Gastrocnemius medialis (tissue), 4 donors: ENCODE measurements at regions of chr9 and their contacts with region 1.

Region 1: DNA sequence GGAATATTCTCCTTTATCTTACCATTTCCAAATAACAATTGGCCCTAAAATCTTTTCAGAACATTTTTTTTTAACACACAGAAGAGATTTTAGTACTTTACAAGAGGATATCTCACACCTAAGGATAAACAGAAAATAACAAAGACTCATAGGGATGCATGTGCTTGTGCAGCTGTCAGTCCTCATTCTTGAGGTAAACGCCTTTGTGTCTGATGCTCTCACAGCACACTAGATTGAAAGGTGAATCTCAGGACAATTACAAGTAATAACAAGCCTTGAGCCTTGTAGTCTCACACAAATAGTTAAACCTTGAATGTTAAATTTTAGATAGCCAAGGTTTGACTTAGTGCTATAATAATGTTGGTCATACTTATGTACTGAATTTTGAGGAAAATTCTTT is 439.2 kb downstream of the PTPRD start:
- DNase-seq: no peak
- ATAC-seq: no peak
- H3K4me3 ChIP-seq: no peak overlapping the region
- H3K27ac ChIP-seq: no peak overlapping the region
- H3K4me1 ChIP-seq: no peaks in the 10 kb centered on the region
- H3K27me3 ChIP-seq: no peaks in the 10 kb centered on the region
- CTCF ChIP-seq: no peak
- POLR2A ChIP-seq: no peak

Region 2: DNA sequence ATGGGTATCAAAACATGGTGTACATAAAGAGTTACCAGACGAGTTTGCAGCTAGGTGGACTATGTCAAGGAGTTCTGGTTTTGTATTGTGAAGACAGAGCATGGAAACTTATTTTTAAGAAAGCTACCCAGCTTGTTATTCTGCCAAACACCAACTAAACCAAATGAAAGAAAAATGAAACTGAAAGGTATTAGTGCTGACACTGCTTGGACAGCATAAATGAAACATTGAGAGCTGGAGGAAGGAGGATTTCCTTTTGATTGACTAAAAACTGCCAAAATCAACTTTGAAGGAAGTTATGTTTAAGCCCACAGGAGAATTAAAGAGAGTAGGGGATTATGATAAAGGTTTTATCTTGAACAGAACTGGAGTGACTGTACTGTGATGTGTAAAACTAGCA is 327.0 kb before region 1 on chr9:
- in situ Hi-C with region 1: no loop called
- intact Hi-C with region 1: no loop called
- DNase-seq: no peak
- ATAC-seq: no peak
- H3K4me3 ChIP-seq: no peak overlapping the region
- H3K27ac ChIP-seq: no peak overlapping the region
- H3K4me1 ChIP-seq: no peaks in the 10 kb centered on the region
- H3K27me3 ChIP-seq: no peaks in the 10 kb centered on the region
- CTCF ChIP-seq: no peak
- POLR2A ChIP-seq: no peak

Region 3: DNA sequence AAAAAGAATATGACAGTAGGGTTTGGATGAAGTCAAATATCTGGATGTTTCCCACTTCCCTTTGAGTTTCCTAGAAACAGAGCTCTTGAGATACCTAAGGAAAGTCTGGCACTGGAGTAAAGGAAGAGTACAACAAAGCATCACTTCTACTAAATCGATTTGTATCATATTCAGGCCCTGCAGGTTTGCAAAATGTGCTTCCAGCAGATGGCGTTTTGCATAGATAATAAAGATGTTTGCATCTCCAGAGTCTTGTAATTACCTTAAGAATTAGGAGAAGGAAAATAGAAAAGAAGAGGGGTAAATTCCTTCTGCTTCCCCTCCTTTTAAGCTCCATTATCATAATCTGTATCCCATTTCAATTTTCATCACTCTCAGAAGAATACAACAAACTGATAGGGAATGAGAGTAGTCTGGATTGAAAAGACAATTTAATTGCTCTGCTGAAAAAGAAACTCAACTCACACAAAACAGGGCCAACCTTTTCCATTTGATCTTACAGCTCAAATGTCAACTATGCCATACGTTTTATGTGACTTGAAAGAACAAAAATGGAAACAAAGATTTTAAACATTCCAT is 58.9 kb after region 1 on chr9:
- in situ Hi-C with region 1: loop called in 1 of 4 experiments (anchors 10 kb)
- intact Hi-C with region 1: no loop called
- DNase-seq: no peak
- ATAC-seq: no peak
- H3K4me3 ChIP-seq: no peak overlapping the region
- H3K27ac ChIP-seq: no peak overlapping the region
- H3K4me1 ChIP-seq: no peaks in the 10 kb centered on the region
- H3K27me3 ChIP-seq: no peaks in the 10 kb centered on the region
- CTCF ChIP-seq: no peak
- POLR2A ChIP-seq: no peak